Ascending aorta (tissue), 2 donors: ENCODE measurements at regions of chr9 and their contacts with region 1.

Region 1: GRCh38 chr9:74773886-74774479 is 113.7 kb downstream of the TRPM6 start:
- DNase-seq: peak in 1 of 2 donors; percentile 85
- H3K4me3 ChIP-seq: no peak overlapping the region
- H3K27ac ChIP-seq: no peak overlapping the region
- H3K4me1 ChIP-seq: no peaks in the 10 kb centered on the region
- H3K27me3 ChIP-seq: no peaks in the 10 kb centered on the region
- CTCF ChIP-seq: peak; percentile 65 to 94 (median 82)

Region 2: DNA sequence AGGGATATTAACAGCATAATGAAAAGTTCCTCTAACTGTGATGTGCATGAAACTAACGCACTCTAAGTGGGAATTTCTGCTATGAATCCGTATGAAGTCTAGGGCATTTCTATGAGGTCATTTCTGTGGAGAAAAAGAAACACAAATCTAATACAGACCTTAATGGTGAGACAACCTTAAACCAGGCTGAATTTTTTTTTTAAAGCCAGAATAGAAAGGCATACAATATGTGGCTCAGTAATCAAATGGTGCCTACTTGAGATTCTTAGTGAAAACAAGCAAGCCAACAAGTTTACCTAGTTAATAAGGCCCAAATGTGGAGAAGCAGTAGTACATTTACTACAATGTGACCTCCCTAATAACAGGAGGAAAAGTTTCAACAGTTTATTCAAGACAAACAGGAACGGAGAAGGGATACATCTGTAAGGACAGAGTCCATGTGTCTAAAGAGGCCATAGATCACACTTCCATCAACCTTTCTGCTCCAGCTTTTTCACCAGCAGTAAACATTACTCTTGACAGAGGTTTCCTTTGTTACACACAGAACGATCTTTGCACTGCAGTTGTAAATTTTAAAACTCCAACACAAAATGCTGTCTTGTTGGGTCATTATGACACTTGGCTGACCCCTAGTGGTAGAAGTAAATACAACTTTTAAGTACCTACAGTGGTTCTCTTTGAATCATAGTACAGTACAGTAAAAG is 227.9 kb after region 1 on chr9:
- intact Hi-C with region 1: loop called (anchors 1 kb)
- DNase-seq: no peak
- H3K4me3 ChIP-seq: no peak overlapping the region
- H3K27ac ChIP-seq: no peak overlapping the region
- H3K4me1 ChIP-seq: no peaks in the 10 kb centered on the region
- H3K27me3 ChIP-seq: no peaks in the 10 kb centered on the region
- CTCF ChIP-seq: peak; percentile 49 to 80 (median 67)

Region 3: GRCh38 chr9:75072895-75073294 is 298.9 kb after region 1 on chr9:
- intact Hi-C with region 1: loop called (anchors 1 kb)
- DNase-seq: no peak
- H3K4me3 ChIP-seq: no peak overlapping the region
- H3K27ac ChIP-seq: no peak overlapping the region
- H3K4me1 ChIP-seq: no peaks in the 10 kb centered on the region
- H3K27me3 ChIP-seq: no peaks in the 10 kb centered on the region
- CTCF ChIP-seq: no peak